Activated CD4-positive, alpha-beta T cell treated with anti-CD3 and anti-CD28 coated beads, Interleukin-2, amount 10 ng/mL, durations not matched to agents 24 days and 14 days (primary cell): ENCODE measurements at regions of chr9 and their contacts with region 1.

Region 1: GRCh38 chr9:112717661-112718341 is at the start of gene INIP:
- DNase-seq: peak; percentile 99
- H3K4me3 Mint-ChIP-seq: peak within 1 kb of the TSS; percentile 94
- H3K27ac Mint-ChIP-seq: peak within 1 kb of the TSS; percentile 99
- H3K4me1 Mint-ChIP-seq: peaks cover 16% of the 10 kb centered on the region
- H3K27me3 Mint-ChIP-seq: no peaks in the 10 kb centered on the region
- total RNA-seq, gene INIP: 34.2 and 36.2 TPM in 2 replicates

Region 2: DNA sequence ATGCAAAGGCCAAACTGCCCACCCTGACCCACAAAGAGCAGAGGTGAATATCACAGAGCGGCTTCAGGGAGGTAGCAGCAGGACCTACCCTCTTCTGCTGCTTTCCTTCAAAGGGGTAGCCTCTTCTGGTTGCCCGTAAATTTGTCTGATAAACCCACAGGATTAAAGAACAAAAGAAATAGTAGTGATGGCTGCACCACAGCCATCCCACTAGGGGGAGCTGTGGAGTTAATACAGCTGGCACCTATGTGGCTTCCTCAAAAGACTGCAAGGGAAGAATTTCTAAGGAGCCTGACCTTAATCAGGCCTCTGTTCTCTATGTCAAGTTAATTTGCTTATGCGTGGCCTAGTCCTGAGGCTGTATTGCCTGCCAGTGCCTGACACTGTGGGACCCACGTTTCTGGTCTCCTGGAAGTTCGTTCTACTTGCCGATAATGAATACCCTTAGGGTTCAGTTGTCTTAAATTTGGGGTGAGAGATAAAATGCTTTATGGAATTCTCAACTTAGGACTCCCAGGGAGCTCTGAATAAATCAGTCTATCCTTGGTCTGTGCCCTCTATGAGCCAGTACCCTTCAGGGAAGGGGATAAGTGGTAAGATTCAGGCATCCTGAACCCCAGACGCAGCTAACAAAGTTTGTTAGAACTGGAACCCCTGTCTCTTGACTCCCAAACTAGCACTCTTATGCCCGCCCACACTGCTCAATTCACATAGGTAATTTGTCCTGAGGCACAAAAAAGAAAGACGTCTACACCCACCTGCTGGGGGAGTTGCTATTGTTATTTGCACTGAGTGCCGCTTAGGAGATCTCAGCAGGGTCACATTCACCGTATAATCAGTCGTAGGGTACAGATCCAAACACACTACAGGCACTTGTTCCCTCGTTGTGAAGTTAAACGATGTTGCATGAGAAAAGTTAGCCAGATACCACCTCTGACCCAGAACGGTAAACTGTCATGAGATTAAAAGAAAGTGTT is 619.8 kb before region 1 on chr9:
- intact Hi-C with region 1: loop called (anchors 10 kb)
- DNase-seq: peak; percentile 91
- H3K4me3 Mint-ChIP-seq: no peak overlapping the region
- H3K27ac Mint-ChIP-seq: peak overlapping the region; percentile 23
- H3K4me1 Mint-ChIP-seq: peaks cover 29% of the 10 kb centered on the region
- H3K27me3 Mint-ChIP-seq: no peaks in the 10 kb centered on the region

Region 3: DNA sequence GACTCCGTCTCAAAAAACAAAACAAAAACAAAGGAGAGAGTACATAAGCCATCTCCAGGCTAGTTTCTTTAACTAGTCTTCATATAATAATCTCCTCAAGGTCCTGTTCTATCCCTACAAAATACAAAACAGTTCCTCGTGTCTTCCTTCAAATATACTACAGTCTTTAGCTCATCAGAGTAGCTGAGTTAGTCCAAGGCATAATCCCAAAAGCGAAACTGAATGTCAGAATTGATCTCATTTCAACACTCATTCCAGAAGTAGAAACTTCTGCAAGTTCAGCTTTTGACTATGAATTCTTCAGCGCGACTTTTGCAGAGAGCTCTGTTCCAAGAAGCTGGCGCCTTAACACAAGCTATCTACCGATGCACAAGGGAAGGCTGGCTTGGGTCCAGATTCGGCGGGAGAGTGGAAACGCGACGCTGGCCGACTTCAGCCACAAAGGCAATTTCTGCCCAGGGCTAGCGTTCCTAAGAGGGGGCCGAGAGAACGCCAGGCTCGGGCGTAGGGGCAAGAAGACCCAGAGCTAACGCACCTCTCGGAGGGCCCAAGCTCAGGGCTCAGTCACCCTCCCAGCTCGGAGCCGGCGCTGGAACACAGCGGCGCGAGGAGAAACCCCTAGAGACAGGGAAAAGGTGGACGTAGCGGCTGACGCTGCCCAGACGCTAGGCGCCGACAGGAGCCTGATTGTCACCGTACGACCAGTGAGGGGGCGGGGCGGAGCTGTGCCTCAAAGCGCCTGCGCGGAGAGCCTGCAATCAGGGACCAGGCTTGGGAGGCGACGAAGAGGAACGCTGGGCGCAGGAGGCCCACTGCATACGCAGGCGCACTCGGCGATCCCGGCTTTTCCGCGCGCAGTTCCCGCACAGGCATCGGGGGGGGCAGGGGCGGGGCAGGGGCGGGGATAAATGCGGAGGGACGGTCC is 338.4 kb before region 1 on chr9:
- intact Hi-C with region 1: loop called (anchors 1 kb)
- DNase-seq: peak; percentile 100
- H3K4me3 Mint-ChIP-seq: peak overlapping the region; percentile 100
- H3K27ac Mint-ChIP-seq: peak overlapping the region; percentile 100
- H3K4me1 Mint-ChIP-seq: peaks cover 42% of the 10 kb centered on the region
- H3K27me3 Mint-ChIP-seq: no peaks in the 10 kb centered on the region

Region 4: GRCh38 chr9:112443200-112443599 is 274.6 kb before region 1 on chr9:
- intact Hi-C with region 1: loop called (anchors 10 kb)
- DNase-seq: peak; percentile 72
- H3K4me3 Mint-ChIP-seq: no peak overlapping the region
- H3K27ac Mint-ChIP-seq: no peak overlapping the region
- H3K4me1 Mint-ChIP-seq: no peaks in the 10 kb centered on the region
- H3K27me3 Mint-ChIP-seq: no peaks in the 10 kb centered on the region

Region 5: GRCh38 chr9:112486221-112487007 is 231.4 kb before region 1 on chr9 and contains the start of gene KIAA1958:
- intact Hi-C with region 1: loop called (anchors 1 kb)
- DNase-seq: peak; percentile 96
- H3K4me3 Mint-ChIP-seq: peak within 1 kb of the TSS; percentile 98
- H3K27ac Mint-ChIP-seq: peak within 1 kb of the TSS; percentile 98
- H3K4me1 Mint-ChIP-seq: peaks cover 28% of the 10 kb centered on the region
- H3K27me3 Mint-ChIP-seq: peaks cover 3% of the 10 kb centered on the region
- total RNA-seq, gene KIAA1958: 9.8 and 10.6 TPM in 2 replicates

Region 6: DNA sequence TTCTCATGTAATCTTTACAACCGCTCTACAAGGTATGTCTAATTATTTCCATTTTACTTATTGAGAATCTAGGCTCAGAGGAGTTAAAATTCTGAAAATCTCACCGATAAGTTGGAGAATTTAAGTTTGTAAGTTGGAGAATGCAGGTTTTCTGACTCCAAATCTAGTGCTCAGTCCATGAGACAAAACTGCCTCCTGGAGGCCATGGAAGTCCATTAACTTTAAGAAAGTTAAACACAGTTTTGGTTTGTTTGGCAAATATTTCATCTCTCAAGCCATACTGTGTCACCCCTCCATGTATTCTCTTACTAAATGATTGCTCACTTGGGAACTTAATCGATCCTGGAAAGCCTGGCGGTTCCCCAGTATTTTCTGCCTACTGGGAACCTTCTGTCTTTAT is 52.5 kb before region 1 on chr9:
- intact Hi-C with region 1: no loop called
- DNase-seq: no peak
- H3K4me3 Mint-ChIP-seq: no peak overlapping the region
- H3K27ac Mint-ChIP-seq: no peak overlapping the region
- H3K4me1 Mint-ChIP-seq: no peaks in the 10 kb centered on the region
- H3K27me3 Mint-ChIP-seq: peaks cover 2% of the 10 kb centered on the region

Region 7: DNA sequence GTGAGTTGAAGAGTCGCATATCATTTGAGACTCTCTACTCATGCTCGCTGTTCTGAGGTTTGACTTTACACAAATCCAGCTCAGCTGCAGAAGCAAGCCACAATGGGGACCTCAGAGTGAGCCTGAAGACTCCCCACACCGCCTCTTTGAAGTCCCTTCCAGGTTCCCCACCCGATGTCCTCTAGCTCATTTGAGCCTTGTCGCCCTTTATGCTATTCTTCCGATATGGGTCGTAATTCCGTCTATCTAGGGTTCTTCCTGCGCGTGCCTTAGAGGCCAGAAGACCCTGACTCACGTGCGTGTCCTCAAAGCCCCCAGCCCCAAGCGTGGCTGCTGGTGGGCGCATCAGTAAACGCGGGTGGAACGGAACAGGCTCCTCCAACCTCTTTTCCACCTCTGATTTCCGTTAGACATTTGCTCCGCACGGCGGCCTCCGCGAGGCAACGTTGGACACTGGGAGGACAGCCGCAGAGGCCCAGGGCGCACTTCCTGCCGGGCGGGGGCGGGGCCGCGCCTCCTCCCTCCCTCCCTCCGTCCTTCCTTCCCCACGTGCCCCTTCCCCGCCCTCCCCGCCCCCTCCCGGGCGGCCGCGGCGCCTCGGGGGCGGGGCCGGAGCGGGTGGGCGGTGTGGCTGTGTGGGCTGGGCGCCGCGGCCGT is 32.4 kb after region 1 on chr9 and contains the start of gene SNX30:
- intact Hi-C with region 1: loop called (anchors 1 kb)
- DNase-seq: peak; percentile 95
- H3K4me3 Mint-ChIP-seq: peak within 1 kb of the TSS; percentile 82
- H3K27ac Mint-ChIP-seq: peak within 1 kb of the TSS; percentile 86
- H3K4me1 Mint-ChIP-seq: peaks cover 51% of the 10 kb centered on the region
- H3K27me3 Mint-ChIP-seq: peaks cover 4% of the 10 kb centered on the region
- total RNA-seq, gene SNX30: 2.6 and 2.9 TPM in 2 replicates

Region 8: DNA sequence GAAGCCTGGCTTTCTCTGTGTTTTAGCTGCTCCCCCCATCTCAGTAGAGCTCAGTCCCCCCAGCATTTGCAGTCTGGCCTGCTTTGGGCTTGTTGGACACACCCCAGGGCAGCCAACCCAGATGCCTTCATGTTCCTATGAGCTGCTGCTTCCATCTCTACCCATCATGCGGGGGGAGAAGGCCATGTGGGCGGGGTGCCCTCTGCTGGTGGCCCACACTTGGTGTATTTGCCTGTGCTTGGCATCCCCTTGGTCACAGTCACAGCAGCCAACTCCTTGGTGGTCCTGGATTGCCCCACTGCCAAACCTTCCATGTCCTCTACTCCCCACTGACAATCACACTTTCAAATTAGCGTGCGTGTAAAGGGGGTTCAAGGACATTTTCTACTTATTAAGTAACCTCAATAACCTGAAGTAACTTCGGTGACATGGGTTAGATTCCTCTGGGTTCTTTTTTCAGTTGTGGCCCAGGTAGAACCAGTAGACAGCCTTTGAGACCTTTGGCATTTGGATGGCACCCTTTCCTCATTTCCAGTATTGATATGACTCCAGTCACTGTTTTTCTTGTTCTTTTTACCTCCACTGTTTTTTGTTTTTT is 75.5 kb after region 1 on chr9:
- intact Hi-C with region 1: loop called (anchors 1 kb)
- DNase-seq: peak; percentile 93
- H3K4me3 Mint-ChIP-seq: no peak overlapping the region
- H3K27ac Mint-ChIP-seq: no peak overlapping the region
- H3K4me1 Mint-ChIP-seq: peaks cover 4% of the 10 kb centered on the region
- H3K27me3 Mint-ChIP-seq: no peaks in the 10 kb centered on the region